CD4-positive, alpha-beta memory T cell (primary cell): ENCODE measurements at regions of chr12 and their contacts with region 1.

Region 1: DNA sequence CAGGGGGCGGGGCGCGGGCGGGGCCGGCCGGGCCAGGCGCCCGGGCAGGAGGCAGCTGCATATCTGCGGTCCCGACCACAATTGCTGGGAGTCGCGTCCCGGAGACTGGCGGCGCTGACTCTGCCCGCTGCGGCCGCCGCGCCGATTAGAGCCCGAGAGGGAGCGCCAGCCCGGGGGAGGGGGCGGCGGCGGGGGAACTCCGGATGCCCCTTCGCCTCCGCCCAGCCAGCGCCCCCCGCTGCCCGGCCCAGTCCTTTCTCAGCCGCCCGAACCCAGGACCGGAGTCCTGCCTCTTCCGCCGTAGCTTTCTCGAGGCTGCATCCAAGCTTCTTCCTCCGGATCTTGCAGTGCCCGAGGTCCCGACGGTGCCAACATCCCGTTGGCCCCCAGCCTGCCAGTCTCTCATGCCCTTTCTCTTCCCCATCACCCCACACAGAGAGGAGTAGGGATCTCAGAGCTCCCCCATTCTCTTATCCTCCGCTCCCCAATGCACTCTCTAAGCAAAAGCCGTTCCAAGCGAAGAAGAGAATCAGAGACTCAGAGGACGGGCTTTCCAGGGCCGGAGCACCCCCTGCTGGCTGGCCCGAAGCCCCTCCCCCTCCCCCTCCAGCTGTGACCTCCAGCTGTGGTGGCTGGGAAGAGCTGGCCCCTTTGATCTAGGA is 8.8 kb upstream of the SP7 start:
- DNase-seq: peak; percentile 62 to 66 (median 65)
- H3K4me3 ChIP-seq: peak overlapping the region in 1 of 2 donors; percentile 73
- H3K4me3 Mint-ChIP-seq: peak overlapping the region; percentile 94 to 99 (median 98)
- H3K27ac ChIP-seq: peak overlapping the region; percentile 44
- H3K27ac Mint-ChIP-seq: peak overlapping the region; percentile 68 to 97 (median 94)
- H3K4me1 ChIP-seq: peaks cover 7% of the 10 kb centered on the region
- H3K4me1 Mint-ChIP-seq: peaks cover 11 to 18% (median 14%) of the 10 kb centered on the region in 4 donors
- H3K27me3 ChIP-seq: no peaks in the 10 kb centered on the region
- H3K27me3 Mint-ChIP-seq: no peaks in the 10 kb centered on the region

Region 2: DNA sequence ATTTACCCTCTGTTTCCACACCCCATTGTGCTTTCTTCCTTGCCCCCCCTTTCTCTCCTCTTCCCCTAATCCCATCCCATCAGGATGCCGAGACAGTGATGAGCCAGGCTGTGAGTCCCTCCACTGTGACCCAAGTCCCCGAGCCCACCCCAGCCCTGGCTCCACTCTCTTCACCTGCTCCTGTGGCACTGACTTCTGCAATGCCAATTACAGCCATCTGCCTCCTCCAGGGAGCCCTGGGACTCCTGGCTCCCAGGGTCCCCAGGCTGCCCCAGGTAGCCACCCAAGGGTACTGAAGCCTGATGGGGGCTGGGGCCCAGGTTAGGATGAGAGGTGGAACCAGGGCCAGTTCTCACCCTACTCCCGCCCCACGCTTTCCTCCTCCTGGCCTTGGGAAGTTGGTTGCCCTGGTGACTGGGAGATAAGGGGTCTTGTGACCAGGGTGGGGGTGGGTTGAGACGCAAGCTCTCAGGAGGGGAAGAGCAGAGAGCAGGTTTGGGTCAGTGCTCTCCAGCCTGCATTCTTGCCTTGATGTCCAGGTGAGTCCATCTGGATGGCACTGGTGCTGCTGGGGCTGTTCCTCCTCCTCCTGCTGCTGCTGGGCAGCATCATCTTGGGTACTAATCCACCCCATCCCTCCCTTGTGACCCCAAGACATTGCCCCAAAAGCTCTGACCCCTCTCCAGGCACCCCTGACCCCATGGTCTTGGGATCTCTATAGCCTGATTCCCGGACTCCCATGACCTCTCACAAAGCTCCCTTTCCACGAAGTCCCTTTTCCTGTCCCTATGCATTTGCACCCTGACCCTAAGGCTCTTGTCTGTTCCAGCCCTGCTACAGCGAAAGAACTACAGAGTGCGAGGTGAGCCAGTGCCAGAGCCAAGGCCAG is 79.9 kb after region 1 on chr12:
- CTCF ChIA-PET with region 1: interaction called, 203 read pairs
- POLR2A ChIA-PET with region 1: interaction called, 7 read pairs
- intact Hi-C with region 1: no loop called
- DNase-seq: no peak
- H3K4me3 ChIP-seq: no peak overlapping the region
- H3K4me3 Mint-ChIP-seq: no peak overlapping the region
- H3K27ac ChIP-seq: no peak overlapping the region
- H3K27ac Mint-ChIP-seq: no peak overlapping the region
- H3K4me1 ChIP-seq: peaks cover 5% of the 10 kb centered on the region
- H3K4me1 Mint-ChIP-seq: peaks cover 5 to 9% (median 6%) of the 10 kb centered on the region in 4 donors
- H3K27me3 ChIP-seq: no peaks in the 10 kb centered on the region
- H3K27me3 Mint-ChIP-seq: no peaks in the 10 kb centered on the region

Region 3: DNA sequence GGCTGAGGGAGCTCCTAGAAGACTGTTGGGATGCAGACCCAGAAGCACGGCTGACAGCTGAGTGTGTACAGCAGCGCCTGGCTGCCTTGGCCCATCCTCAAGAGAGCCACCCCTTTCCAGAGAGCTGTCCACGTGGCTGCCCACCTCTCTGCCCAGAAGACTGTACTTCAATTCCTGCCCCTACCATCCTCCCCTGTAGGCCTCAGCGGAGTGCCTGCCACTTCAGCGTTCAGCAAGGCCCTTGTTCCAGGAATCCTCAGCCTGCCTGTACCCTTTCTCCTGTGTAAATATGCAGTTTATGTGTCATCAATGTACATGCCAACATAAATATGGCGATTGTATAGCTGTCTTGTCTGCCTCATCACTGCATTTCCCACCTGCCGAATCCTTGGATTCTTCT is 86.2 kb after region 1 on chr12:
- CTCF ChIA-PET with region 1: interaction called, 11 read pairs
- POLR2A ChIA-PET with region 1: no interaction called
- intact Hi-C with region 1: no loop called
- DNase-seq: no peak
- H3K4me3 ChIP-seq: no peak overlapping the region
- H3K4me3 Mint-ChIP-seq: no peak overlapping the region
- H3K27ac ChIP-seq: no peak overlapping the region
- H3K27ac Mint-ChIP-seq: peak overlapping the region in 1 of 7 donors; percentile 19
- H3K4me1 ChIP-seq: no peaks in the 10 kb centered on the region
- H3K4me1 Mint-ChIP-seq: peaks cover 0 to 1% (median 0%) of the 10 kb centered on the region in 4 donors
- H3K27me3 ChIP-seq: no peaks in the 10 kb centered on the region
- H3K27me3 Mint-ChIP-seq: no peaks in the 10 kb centered on the region